Caco-2 (cell line): ENCODE measurements at regions of chr7 and their contacts with region 1.

Region 1: GRCh38 chr7:102097584-102098161 is 189.0 kb upstream of the SH2B2 start:
- DNase-seq: peak; percentile 93 to 97
- H3K4me3 ChIP-seq: no peak overlapping the region
- H3K4me3 Mint-ChIP-seq: peak overlapping the region; percentile 71
- H3K27ac Mint-ChIP-seq: peak overlapping the region; percentile 99
- H3K4me1 ChIP-seq: peaks cover 75% of the 10 kb centered on the region
- H3K4me1 Mint-ChIP-seq: peaks cover 29% of the 10 kb centered on the region
- H3K27me3 ChIP-seq: no peaks in the 10 kb centered on the region
- H3K27me3 Mint-ChIP-seq: no peaks in the 10 kb centered on the region
- CTCF ChIP-seq: no peak

Region 2: DNA sequence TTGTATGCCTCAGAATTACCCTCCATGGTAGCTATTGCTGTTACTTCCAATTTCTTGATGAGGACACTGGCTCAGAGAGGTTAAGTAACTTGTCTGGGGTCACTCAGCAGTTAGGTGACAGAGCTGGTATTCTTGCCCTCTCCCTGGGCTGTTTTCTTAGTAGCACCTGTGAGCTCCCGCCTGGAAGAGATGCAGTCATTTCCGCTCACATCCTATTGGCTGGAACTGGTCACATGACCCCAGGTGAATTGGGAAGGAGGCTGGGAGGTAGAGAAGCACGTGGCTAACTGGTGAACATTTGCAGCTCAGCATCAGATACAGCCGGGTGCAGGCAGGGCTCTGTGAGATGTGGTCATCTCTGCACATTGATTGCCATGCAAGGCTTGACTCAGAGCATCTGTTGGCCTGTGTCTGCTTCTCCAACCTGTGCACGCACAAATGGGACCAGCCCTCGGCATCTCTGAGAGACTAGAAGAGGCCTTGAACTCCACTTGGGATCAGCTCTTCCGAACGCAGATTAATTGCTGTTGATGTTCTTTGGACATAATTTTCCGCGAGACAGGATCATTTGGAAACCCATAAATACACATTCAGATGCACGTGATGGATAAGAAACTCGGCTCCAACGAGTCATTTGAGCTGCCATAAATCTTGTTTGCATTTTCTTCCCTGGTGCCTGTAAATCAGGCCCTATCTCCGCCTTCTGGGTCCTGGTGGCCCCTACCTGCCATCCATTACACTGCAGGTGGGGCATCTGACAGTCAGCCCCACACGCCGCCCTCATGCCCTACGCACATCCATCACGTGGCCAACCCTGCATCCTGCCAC is 511.4 kb before region 1 on chr7:
- CTCF ChIA-PET with region 1: no interaction called
- POLR2A ChIA-PET with region 1: no interaction called
- intact Hi-C with region 1: loop called (anchors 1 kb)
- DNase-seq: peak; percentile 72 to 89
- H3K4me3 ChIP-seq: no peak overlapping the region
- H3K4me3 Mint-ChIP-seq: peak overlapping the region; percentile 44
- H3K27ac Mint-ChIP-seq: peak overlapping the region; percentile 74
- H3K4me1 ChIP-seq: peaks cover 56% of the 10 kb centered on the region
- H3K4me1 Mint-ChIP-seq: peaks cover 48% of the 10 kb centered on the region
- H3K27me3 ChIP-seq: no peaks in the 10 kb centered on the region
- H3K27me3 Mint-ChIP-seq: no peaks in the 10 kb centered on the region
- CTCF ChIP-seq: peak in 1 of 2 experiments; percentile 28

Region 3: DNA sequence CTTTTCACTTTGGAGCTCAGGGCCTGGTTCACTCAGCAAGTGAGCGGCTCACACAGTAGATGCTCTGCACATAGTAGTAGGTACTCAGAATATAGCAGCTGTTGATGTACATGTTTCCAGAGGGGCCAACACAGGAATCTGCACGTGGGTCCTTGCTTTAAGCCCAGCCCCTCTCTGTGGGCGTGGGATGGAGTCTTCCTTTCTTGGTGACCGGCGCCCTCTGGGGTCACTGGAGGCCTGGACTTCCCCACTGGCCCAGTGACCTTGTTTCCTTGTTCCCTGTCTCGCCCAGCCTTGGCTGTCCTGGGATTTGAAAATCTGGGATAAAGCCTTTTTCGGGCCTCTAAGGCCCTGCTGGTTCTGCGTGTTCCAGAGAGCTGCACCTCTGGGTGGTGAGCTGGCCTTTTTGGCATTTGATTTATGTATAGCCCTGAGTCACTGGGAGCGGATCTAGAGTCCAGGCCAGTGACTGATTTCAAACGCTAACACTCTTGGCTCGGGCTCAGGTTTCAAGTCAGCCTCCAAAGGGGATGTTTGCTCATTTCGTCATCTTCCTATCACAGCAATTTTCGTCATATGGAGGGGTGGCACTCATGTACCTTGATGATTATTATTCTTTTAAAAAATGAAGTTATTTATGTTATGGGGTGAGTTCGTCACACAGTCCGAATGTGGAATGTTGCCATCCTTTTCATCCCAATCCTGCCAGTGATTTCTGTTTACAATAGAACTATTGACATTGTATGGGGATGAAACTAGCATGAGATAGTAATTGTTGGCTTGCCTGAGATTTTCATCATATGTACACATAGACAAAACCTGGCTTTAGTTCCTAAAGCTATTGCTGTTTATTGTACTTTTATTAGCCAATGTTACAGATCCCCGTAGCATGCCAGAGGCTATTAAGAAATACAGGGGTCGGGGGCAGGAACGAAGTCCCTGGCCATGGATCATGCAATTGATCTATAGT is 214.8 kb before region 1 on chr7:
- CTCF ChIA-PET with region 1: interaction called, 4 read pairs
- POLR2A ChIA-PET with region 1: interaction called, 5 read pairs
- intact Hi-C with region 1: loop called (anchors 1 kb)
- DNase-seq: peak; percentile 92
- H3K4me3 ChIP-seq: peak overlapping the region; percentile 13; the same call in 1 of the 2 replicates
- H3K4me3 Mint-ChIP-seq: peak overlapping the region; percentile 66
- H3K27ac Mint-ChIP-seq: peak overlapping the region; percentile 96
- H3K4me1 ChIP-seq: peaks cover 63% of the 10 kb centered on the region
- H3K4me1 Mint-ChIP-seq: peaks cover 62% of the 10 kb centered on the region
- H3K27me3 ChIP-seq: no peaks in the 10 kb centered on the region
- H3K27me3 Mint-ChIP-seq: no peaks in the 10 kb centered on the region
- CTCF ChIP-seq: peak in 1 of 2 experiments; percentile 21

Region 4: GRCh38 chr7:102009628-102010027 is 88.0 kb before region 1 on chr7:
- CTCF ChIA-PET with region 1: no interaction called
- POLR2A ChIA-PET with region 1: interaction called, 20 read pairs
- intact Hi-C with region 1: loop called (anchors 1 kb)
- DNase-seq: peak; percentile 29 to 44
- H3K4me3 ChIP-seq: no peak overlapping the region
- H3K4me3 Mint-ChIP-seq: peak overlapping the region; percentile 24
- H3K27ac Mint-ChIP-seq: peak overlapping the region; percentile 86
- H3K4me1 ChIP-seq: peaks cover 87% of the 10 kb centered on the region
- H3K4me1 Mint-ChIP-seq: peaks cover 67% of the 10 kb centered on the region
- H3K27me3 ChIP-seq: no peaks in the 10 kb centered on the region
- H3K27me3 Mint-ChIP-seq: no peaks in the 10 kb centered on the region
- CTCF ChIP-seq: no peak

Region 5: DNA sequence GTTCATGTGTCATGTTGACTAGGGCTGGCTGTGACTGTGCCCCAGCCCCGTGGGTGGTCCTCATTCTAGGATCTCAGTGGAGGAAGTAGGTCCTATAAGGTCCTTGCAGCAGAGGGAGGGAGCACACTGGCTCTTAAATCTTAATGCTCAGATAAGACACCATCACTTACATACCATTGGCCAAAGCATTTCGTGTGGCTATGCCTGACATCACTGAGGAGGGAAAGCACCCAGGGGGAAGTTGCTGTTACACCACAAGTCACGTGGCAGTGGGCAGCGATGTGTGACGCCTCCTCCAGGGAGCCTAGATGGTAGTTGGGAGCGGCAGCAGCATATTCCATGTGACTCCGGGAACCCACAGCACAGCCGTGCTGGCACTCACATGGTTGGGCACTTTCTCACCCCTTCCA is 35.7 kb before region 1 on chr7:
- CTCF ChIA-PET with region 1: interaction called, 5 read pairs
- POLR2A ChIA-PET with region 1: no interaction called
- intact Hi-C with region 1: loop called (anchors 5 kb)
- DNase-seq: no peak
- H3K4me3 ChIP-seq: no peak overlapping the region
- H3K4me3 Mint-ChIP-seq: no peak overlapping the region
- H3K27ac Mint-ChIP-seq: peak overlapping the region; percentile 77
- H3K4me1 ChIP-seq: peaks cover 18% of the 10 kb centered on the region
- H3K4me1 Mint-ChIP-seq: peaks cover 19% of the 10 kb centered on the region
- H3K27me3 ChIP-seq: no peaks in the 10 kb centered on the region
- H3K27me3 Mint-ChIP-seq: no peaks in the 10 kb centered on the region
- CTCF ChIP-seq: no peak

Region 6: GRCh38 chr7:102085218-102085772 is 12.4 kb before region 1 on chr7:
- CTCF ChIA-PET with region 1: no interaction called
- POLR2A ChIA-PET with region 1: no interaction called
- intact Hi-C with region 1: no loop called
- DNase-seq: no peak
- H3K4me3 ChIP-seq: no peak overlapping the region
- H3K4me3 Mint-ChIP-seq: no peak overlapping the region
- H3K27ac Mint-ChIP-seq: no peak overlapping the region
- H3K4me1 ChIP-seq: peaks cover 8% of the 10 kb centered on the region
- H3K4me1 Mint-ChIP-seq: peaks cover 27% of the 10 kb centered on the region
- H3K27me3 ChIP-seq: no peaks in the 10 kb centered on the region
- H3K27me3 Mint-ChIP-seq: no peaks in the 10 kb centered on the region
- CTCF ChIP-seq: no peak

Region 7: GRCh38 chr7:102152672-102153585 is 55.3 kb after region 1 on chr7:
- CTCF ChIA-PET with region 1: no interaction called
- POLR2A ChIA-PET with region 1: no interaction called
- intact Hi-C with region 1: loop called (anchors 1 kb)
- DNase-seq: peak; percentile 73 to 85
- H3K4me3 ChIP-seq: no peak overlapping the region
- H3K4me3 Mint-ChIP-seq: peak overlapping the region; percentile 61
- H3K27ac Mint-ChIP-seq: peak overlapping the region; percentile 98
- H3K4me1 ChIP-seq: peaks cover 27% of the 10 kb centered on the region
- H3K4me1 Mint-ChIP-seq: peaks cover 31% of the 10 kb centered on the region
- H3K27me3 ChIP-seq: no peaks in the 10 kb centered on the region
- H3K27me3 Mint-ChIP-seq: no peaks in the 10 kb centered on the region
- CTCF ChIP-seq: no peak

Region 8: DNA sequence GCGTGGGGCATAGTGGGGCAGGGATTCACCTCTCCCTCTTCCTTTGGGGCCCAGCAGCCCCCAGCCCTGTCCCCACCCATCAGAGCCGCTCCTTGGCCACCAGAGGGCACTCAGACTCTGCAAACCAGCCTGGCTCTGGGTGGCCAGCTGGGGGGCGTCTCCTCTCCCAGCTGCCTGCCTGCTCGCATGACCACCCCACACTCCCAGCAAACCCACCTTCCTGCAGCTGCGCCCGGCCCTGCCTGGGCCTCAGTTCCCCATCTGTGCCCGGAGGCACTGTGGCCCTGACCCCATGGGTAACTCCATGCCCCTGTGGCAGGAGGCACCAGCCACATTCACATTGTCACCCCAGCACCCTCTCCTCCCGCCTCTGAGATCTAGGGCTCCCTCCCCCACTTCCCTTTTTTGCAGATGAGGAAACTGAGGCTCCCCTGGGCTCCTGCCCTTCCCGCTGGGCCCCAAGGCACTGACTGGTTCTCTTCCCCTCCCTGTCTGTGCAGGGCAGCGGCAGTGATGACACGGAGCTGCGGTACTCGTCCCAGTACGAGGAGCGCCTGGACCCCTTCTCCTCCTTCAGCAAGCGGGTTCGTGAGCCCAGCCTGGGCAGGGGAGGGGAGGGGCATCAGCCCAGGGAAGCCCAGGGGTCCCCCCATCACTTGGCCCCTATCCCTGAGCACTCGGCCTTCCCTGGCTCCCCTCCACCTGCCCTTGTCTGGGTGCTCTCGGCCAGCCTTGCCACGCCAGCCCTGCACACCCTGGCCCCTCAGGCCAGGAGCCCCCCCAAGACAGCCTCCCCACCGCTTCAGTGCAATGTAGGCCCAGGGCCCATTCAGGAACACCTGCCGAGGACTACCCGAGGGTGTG is 182.1 kb after region 1 on chr7:
- CTCF ChIA-PET with region 1: no interaction called
- POLR2A ChIA-PET with region 1: no interaction called
- intact Hi-C with region 1: no loop called
- DNase-seq: peak; percentile 73 to 79
- H3K4me3 ChIP-seq: no peak overlapping the region
- H3K4me3 Mint-ChIP-seq: no peak overlapping the region
- H3K27ac Mint-ChIP-seq: no peak overlapping the region
- H3K4me1 ChIP-seq: no peaks in the 10 kb centered on the region
- H3K4me1 Mint-ChIP-seq: peaks cover 1% of the 10 kb centered on the region
- H3K27me3 ChIP-seq: no peaks in the 10 kb centered on the region
- H3K27me3 Mint-ChIP-seq: no peaks in the 10 kb centered on the region
- CTCF ChIP-seq: peak; percentile 92 to 96